IMR-90 (cell line): ENCODE measurements at regions of chrX and their contacts with region 1.

Region 1: DNA sequence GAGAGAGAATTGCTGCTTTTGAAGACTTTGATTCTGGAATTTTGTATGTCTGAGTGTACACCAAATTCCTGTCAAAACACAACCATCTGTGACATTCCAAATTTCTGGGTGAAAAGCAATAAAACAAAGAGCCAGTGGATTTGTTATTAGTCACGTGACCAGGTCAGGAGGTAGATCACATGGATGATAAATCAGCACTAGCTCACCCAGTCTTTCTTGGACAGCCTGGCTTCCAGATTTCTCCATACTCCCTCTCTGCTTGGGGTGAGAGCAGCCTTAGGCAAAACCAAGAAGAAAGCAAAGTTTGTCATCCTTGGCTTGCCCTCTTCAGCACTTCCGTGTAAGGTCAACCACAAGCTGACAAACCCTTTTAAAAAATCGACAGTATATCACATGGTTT is 194.2 kb downstream of the CLCN4 start:
- DNase-seq: peak; percentile 41
- ATAC-seq: 0 out of 2 replicates have a peak, but pooled peaks have one; percentile 27
- H3K4me3 ChIP-seq: no peak overlapping the region
- H3K27ac ChIP-seq: no peak overlapping the region
- H3K4me1 ChIP-seq: no peaks in the 10 kb centered on the region
- H3K27me3 ChIP-seq: no peaks in the 10 kb centered on the region
- CTCF ChIP-seq: no peak
- POLR2A ChIP-seq: no peak
- RAD21 ChIP-seq: no peak

Region 2: DNA sequence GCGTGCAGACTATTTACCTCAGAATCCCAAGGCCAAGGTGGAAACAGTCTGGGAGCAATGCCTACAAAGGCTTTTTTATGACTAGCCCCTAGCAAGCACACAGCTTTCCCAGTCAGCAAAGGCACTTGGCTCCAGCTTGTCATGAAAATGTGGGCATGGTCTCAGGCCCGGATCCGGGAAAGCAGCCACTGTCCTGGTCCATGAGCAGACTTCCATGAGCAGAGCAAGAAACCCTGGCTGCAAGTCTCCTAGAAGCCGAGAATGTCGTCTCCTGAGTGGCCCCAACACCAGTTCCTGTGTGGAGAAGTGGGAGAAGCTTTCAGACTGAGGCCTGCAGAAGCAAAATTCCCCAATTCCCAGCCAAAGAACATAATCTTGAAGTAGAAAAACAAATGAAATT is 78.9 kb after region 1 on chrX:
- CTCF ChIA-PET with region 1: no interaction called
- POLR2A ChIA-PET with region 1: no interaction called
- dilution Hi-C with region 1: no loop called
- in situ Hi-C with region 1: no loop called
- intact Hi-C with region 1: loop called (anchors 5 kb)
- DNase-seq: no peak
- ATAC-seq: no peak
- H3K4me3 ChIP-seq: no peak overlapping the region
- H3K27ac ChIP-seq: no peak overlapping the region
- H3K4me1 ChIP-seq: no peaks in the 10 kb centered on the region
- H3K27me3 ChIP-seq: no peaks in the 10 kb centered on the region
- CTCF ChIP-seq: no peak
- POLR2A ChIP-seq: no peak
- RAD21 ChIP-seq: no peak

Region 3: GRCh38 chrX:10597871-10598270 is 246.9 kb after region 1 on chrX:
- CTCF ChIA-PET with region 1: no interaction called
- POLR2A ChIA-PET with region 1: no interaction called
- dilution Hi-C with region 1: no loop called
- in situ Hi-C with region 1: no loop called
- intact Hi-C with region 1: no loop called
- DNase-seq: peak; percentile 32
- ATAC-seq: no peak
- H3K4me3 ChIP-seq: no peak overlapping the region
- H3K27ac ChIP-seq: no peak overlapping the region
- H3K4me1 ChIP-seq: no peaks in the 10 kb centered on the region
- H3K27me3 ChIP-seq: no peaks in the 10 kb centered on the region
- CTCF ChIP-seq: peak; percentile 46
- POLR2A ChIP-seq: no peak
- RAD21 ChIP-seq: peak; percentile 57